Caco-2 (cell line): ENCODE measurements at regions of chr4 and their contacts with region 1.

Region 1: GRCh38 chr4:155376387-155377268 is at the start of gene MAP9:
- DNase-seq: no peak
- H3K4me3 ChIP-seq: no peak within 1 kb of the TSS
- H3K4me3 Mint-ChIP-seq: no peak within 1 kb of the TSS
- H3K27ac Mint-ChIP-seq: no peak within 1 kb of the TSS
- H3K4me1 ChIP-seq: no peaks in the 10 kb centered on the region
- H3K4me1 Mint-ChIP-seq: no peaks in the 10 kb centered on the region
- H3K27me3 ChIP-seq: no peaks in the 10 kb centered on the region
- H3K27me3 Mint-ChIP-seq: peaks cover 3% of the 10 kb centered on the region
- CTCF ChIP-seq: no peak
- total RNA-seq, gene MAP9: not detected in 2 replicates

Region 2: DNA sequence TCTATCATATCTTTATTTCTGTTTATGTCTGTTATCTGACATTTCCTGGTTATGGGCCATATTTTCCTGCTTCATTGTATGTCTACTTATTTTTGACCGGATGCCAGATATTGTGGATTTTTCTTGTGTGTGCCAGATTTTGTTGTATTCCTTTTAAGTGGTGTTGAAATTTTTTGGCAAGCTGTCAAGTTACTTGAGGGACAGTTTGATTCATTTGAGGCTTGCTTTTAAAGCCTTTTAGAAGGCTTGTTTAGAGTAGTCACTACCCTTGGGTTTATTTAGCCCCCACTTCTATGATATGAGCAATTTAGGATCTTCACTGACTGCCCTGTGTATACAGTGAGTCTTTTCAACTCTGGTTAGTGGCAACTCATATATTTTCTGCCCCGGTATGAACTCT is 197.4 kb before region 1 on chr4:
- CTCF ChIA-PET with region 1: no interaction called
- POLR2A ChIA-PET with region 1: no interaction called
- intact Hi-C with region 1: loop called (anchors 10 kb)
- DNase-seq: no peak
- H3K4me3 ChIP-seq: no peak overlapping the region
- H3K4me3 Mint-ChIP-seq: no peak overlapping the region
- H3K27ac Mint-ChIP-seq: no peak overlapping the region
- H3K4me1 ChIP-seq: no peaks in the 10 kb centered on the region
- H3K4me1 Mint-ChIP-seq: no peaks in the 10 kb centered on the region
- H3K27me3 ChIP-seq: no peaks in the 10 kb centered on the region
- H3K27me3 Mint-ChIP-seq: peaks cover 3% of the 10 kb centered on the region
- CTCF ChIP-seq: no peak